ENCODE measurements at regions of chr17 and their contacts with region 1.

Region 1: GRCh38 chr17:5587438-5588032 is 3.2 kb upstream of the NLRP1 start:
- DNase-seq: peak in 4 of 5 donors; percentile 40 to 75 (median 67)
- H3K4me3 ChIP-seq: no peak overlapping the region
- H3K4me3 Mint-ChIP-seq: peak overlapping the region in 6 of 7 donors; percentile 5 to 58 (median 34)
- H3K27ac ChIP-seq: no peak overlapping the region
- H3K27ac Mint-ChIP-seq: peak overlapping the region; percentile 68 to 97 (median 91)
- H3K4me1 ChIP-seq: peaks cover 39% of the 10 kb centered on the region
- H3K4me1 Mint-ChIP-seq: peaks cover 38 to 49% (median 40%) of the 10 kb centered on the region in 3 donors
- H3K27me3 ChIP-seq: no peaks in the 10 kb centered on the region
- H3K27me3 Mint-ChIP-seq: peaks cover 4 to 5% of the 10 kb centered on the region in 2 donors

Region 2: GRCh38 chr17:5672815-5673430 is 85.4 kb after region 1 on chr17:
- CTCF ChIA-PET with region 1: no interaction called
- POLR2A ChIA-PET with region 1: no interaction called
- DNase-seq: no peak
- H3K4me3 ChIP-seq: no peak overlapping the region
- H3K4me3 Mint-ChIP-seq: no peak overlapping the region
- H3K27ac ChIP-seq: no peak overlapping the region
- H3K27ac Mint-ChIP-seq: peak overlapping the region in 1 of 8 donors; percentile 13
- H3K4me1 ChIP-seq: no peaks in the 10 kb centered on the region
- H3K4me1 Mint-ChIP-seq: no peaks in the 10 kb centered on the region
- H3K27me3 ChIP-seq: peaks cover 8% of the 10 kb centered on the region
- H3K27me3 Mint-ChIP-seq: peaks cover 14 to 41% of the 10 kb centered on the region in 2 donors

Region 3: GRCh38 chr17:5683241-5683640 is 95.7 kb after region 1 on chr17:
- CTCF ChIA-PET with region 1: no interaction called
- POLR2A ChIA-PET with region 1: no interaction called
- DNase-seq: no peak
- H3K4me3 ChIP-seq: no peak overlapping the region
- H3K4me3 Mint-ChIP-seq: no peak overlapping the region
- H3K27ac ChIP-seq: no peak overlapping the region
- H3K27ac Mint-ChIP-seq: no peak overlapping the region
- H3K4me1 ChIP-seq: no peaks in the 10 kb centered on the region
- H3K4me1 Mint-ChIP-seq: no peaks in the 10 kb centered on the region
- H3K27me3 ChIP-seq: no peaks in the 10 kb centered on the region
- H3K27me3 Mint-ChIP-seq: peaks cover 29 to 54% of the 10 kb centered on the region in 2 donors

Region 4: GRCh38 chr17:5706577-5707216 is 119.2 kb after region 1 on chr17:
- CTCF ChIA-PET with region 1: interaction called, 25 read pairs
- POLR2A ChIA-PET with region 1: interaction called, 3 read pairs
- DNase-seq: peak; percentile 25 to 71 (median 39)
- H3K4me3 ChIP-seq: no peak overlapping the region
- H3K4me3 Mint-ChIP-seq: no peak overlapping the region
- H3K27ac ChIP-seq: no peak overlapping the region
- H3K27ac Mint-ChIP-seq: no peak overlapping the region
- H3K4me1 ChIP-seq: no peaks in the 10 kb centered on the region
- H3K4me1 Mint-ChIP-seq: no peaks in the 10 kb centered on the region
- H3K27me3 ChIP-seq: no peaks in the 10 kb centered on the region
- H3K27me3 Mint-ChIP-seq: peaks cover 27 to 56% of the 10 kb centered on the region in 2 donors

Region 5: DNA sequence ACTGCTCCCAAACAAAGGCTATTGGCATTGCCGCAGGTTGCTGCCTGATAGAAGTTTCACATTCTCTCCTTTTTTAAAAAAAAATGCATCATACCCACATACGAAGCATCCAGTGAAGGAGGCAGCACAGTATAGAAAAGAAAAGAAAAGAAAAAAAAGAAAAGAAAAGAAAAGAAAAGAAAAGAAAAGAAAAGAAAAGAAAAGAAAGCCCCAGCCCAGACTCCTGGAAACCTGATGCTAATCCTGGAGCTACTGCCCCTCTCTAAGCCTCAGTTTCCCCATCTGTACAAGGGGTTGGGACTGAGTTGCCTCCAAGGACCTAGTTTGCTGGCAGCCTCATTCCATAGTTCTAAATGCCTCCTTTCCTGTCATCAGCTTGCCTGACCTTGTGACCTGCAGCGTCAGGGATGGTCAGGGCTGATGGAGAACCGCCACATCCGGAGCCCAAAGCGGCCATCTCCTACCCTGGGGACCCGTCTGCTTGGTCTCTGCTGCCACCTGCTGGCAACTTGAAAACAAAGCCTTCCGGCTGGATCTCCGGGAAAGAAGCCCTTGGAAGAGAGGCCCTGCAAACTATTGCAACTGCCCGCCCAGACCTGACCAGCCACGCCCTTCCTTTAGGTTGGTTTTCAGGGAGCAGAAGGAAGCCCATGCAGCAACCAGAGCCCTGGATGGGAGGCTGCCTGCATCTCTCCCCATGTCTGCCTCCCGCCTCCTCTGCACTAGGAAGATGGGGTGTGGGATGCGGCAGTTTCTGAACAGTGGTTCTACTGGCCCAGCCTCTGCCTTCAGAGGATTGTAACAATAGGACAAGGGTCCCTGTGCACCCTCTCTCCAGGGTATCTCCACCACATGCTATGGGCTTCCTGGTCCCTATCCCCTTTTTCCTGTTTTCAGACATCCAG is 834.4 kb after region 1 on chr17:
- CTCF ChIA-PET with region 1: interaction called, 17 read pairs
- POLR2A ChIA-PET with region 1: no interaction called
- DNase-seq: peak; percentile 42 to 78 (median 61)
- H3K4me3 ChIP-seq: no peak overlapping the region
- H3K4me3 Mint-ChIP-seq: no peak overlapping the region
- H3K27ac ChIP-seq: no peak overlapping the region
- H3K27ac Mint-ChIP-seq: no peak overlapping the region
- H3K4me1 ChIP-seq: peaks cover 5% of the 10 kb centered on the region
- H3K4me1 Mint-ChIP-seq: peaks cover 2 to 7% (median 2%) of the 10 kb centered on the region in 3 donors
- H3K27me3 ChIP-seq: no peaks in the 10 kb centered on the region
- H3K27me3 Mint-ChIP-seq: peaks cover 2 to 36% of the 10 kb centered on the region in 2 donors